K562 (cell line): ENCODE measurements at regions of chr16 and their contacts with region 1.

Region 1: GRCh38 chr16:2194852-2195321 is 1.5 kb downstream of the CASKIN1 start:
- DNase-seq: peak in 3 of 4 experiments; percentile 45 to 83 (median 73)
- ATAC-seq: peak; percentile 90
- H3K4me3 ChIP-seq: no peak overlapping the region
- H3K27ac ChIP-seq: no peak overlapping the region
- H3K4me1 ChIP-seq: peaks cover 3 to 65% of the 10 kb centered on the region in 2 experiments; a peak in 4 of 5 replicates
- H3K27me3 ChIP-seq: peaks cover 0 to 5% of the 10 kb centered on the region in 2 experiments; a peak in 2 of 5 replicates
- CTCF ChIP-seq: peak; percentile 67 to 84 (median 75)
- EP300 ChIP-seq: no peak
- POLR2A ChIP-seq: no peak
- RAD21 ChIP-seq: peak; percentile 67 to 86

Region 2: GRCh38 chr16:2205104-2205966 is 10.4 kb after region 1 on chr16 and contains the start of gene MLST8:
- CTCF ChIA-PET with region 1: no interaction called
- POLR2A ChIA-PET with region 1: interaction called, 15 read pairs
- in situ Hi-C with region 1: no loop called
- intact Hi-C with region 1: no loop called
- DNase-seq: peak; percentile 92 to 98 (median 96)
- ATAC-seq: peak; percentile 79
- H3K4me3 ChIP-seq: peak within 1 kb of the TSS; percentile 84
- H3K27ac ChIP-seq: peak within 1 kb of the TSS; percentile 93
- H3K4me1 ChIP-seq: peaks cover 13 to 61% of the 10 kb centered on the region in 2 experiments; a peak in 4 of 5 replicates
- H3K27me3 ChIP-seq: no peaks in the 10 kb centered on the region
- CTCF ChIP-seq: 0 out of 6 replicates have a peak, but pooled peaks of 1 of the 3 experiments have one; percentile 15
- EP300 ChIP-seq: no peak
- POLR2A ChIP-seq: peak; percentile 93
- RAD21 ChIP-seq: no peak
- polyA plus RNA-seq, gene MLST8: 1.5 to 9.8 TPM

Region 3: DNA sequence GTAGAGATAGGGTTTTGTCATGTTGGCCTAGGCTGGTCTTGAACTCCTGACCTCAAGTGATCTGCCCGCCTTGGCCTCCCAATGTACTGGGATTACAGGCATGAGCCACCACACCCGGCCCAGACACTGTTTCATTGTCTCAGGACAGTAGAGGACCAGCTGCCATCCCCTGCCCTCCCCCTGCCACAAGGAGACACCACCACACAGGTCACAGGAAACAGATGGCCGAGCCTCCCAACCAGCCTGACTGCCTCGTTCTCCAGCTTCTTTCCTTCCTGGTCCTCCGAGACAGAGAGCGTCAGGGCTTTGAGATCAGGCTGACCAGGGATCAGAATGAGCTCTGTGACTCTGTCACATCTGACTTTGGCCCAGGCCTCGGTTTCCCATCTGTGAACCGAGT is 93.8 kb after region 1 on chr16:
- CTCF ChIA-PET with region 1: no interaction called
- POLR2A ChIA-PET with region 1: no interaction called
- in situ Hi-C with region 1: no loop called
- intact Hi-C with region 1: no loop called
- DNase-seq: no peak
- ATAC-seq: no peak
- H3K4me3 ChIP-seq: no peak overlapping the region
- H3K27ac ChIP-seq: no peak overlapping the region
- H3K4me1 ChIP-seq: peaks cover 0 to 8% of the 10 kb centered on the region in 2 experiments; a peak in 1 of 5 replicates
- H3K27me3 ChIP-seq: no peaks in the 10 kb centered on the region
- CTCF ChIP-seq: no peak
- EP300 ChIP-seq: no peak
- POLR2A ChIP-seq: no peak
- RAD21 ChIP-seq: no peak

Region 4: GRCh38 chr16:2365397-2366294 is 170.8 kb after region 1 on chr16:
- CTCF ChIA-PET with region 1: no interaction called
- POLR2A ChIA-PET with region 1: no interaction called
- in situ Hi-C with region 1: no loop called
- intact Hi-C with region 1: no loop called
- DNase-seq: no peak
- ATAC-seq: no peak
- H3K4me3 ChIP-seq: no peak overlapping the region
- H3K27ac ChIP-seq: no peak overlapping the region
- H3K4me1 ChIP-seq: peaks cover 0 to 4% of the 10 kb centered on the region in 2 experiments; a peak in 2 of 5 replicates
- H3K27me3 ChIP-seq: peaks cover 13 to 21% of the 10 kb centered on the region in 2 experiments; a peak in 4 of 5 replicates
- CTCF ChIP-seq: no peak
- EP300 ChIP-seq: no peak
- POLR2A ChIP-seq: no peak
- RAD21 ChIP-seq: no peak